Aorta (tissue), 5 donors: ENCODE measurements at regions of chr10 and their contacts with region 1.

Region 1: DNA sequence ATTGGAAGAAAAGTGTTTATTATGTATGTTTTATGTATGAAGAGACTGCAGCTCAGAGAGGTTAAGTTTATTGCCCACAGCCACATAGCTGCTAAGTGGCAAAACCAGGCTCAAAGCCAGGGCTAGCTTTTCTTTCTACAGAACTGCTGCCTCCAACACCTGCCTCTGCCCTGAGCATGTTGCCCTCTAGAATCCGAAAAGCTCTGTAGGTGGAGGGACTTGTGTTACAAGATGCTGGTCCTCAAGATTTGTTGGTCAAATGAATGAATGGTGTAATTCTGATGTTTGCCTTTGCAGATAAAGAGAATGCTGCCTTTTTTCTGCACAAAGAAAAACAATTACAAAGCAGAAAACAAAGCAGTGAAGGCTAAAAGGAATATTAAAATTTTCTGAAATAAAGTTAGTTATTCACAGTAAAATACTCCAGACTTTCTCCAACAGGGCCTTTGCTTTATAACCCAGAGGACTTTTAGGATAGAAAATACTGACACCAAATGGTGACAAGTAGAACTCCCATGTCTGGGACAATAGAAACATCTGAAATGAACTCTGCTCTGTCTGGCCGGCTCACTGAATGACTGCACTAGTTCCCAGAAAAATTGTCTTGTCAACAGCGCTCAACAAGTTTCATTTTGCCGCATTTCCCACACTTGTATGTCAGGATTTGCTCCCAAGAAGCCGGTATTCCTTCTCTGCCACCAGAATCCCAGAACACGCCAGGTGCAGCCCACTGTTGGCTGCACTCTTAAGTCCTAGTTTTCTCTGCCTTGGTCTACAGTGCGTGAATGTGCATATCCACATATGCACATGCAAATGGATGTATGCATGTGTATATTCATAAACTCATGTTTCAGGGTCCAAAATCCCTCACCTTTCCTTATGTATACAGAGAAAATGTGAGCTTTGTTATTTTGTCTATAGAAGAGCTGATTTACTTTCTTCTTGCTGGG is 11.0 kb upstream of the DNTT start:
- DNase-seq: no peak
- ATAC-seq: peak; percentile 80
- H3K4me3 ChIP-seq: no peak overlapping the region
- H3K27ac ChIP-seq: no peak overlapping the region
- H3K4me1 ChIP-seq: peaks cover 0 to under 1% of the 10 kb centered on the region in 2 donors
- H3K27me3 ChIP-seq: no peaks in the 10 kb centered on the region

Region 2: DNA sequence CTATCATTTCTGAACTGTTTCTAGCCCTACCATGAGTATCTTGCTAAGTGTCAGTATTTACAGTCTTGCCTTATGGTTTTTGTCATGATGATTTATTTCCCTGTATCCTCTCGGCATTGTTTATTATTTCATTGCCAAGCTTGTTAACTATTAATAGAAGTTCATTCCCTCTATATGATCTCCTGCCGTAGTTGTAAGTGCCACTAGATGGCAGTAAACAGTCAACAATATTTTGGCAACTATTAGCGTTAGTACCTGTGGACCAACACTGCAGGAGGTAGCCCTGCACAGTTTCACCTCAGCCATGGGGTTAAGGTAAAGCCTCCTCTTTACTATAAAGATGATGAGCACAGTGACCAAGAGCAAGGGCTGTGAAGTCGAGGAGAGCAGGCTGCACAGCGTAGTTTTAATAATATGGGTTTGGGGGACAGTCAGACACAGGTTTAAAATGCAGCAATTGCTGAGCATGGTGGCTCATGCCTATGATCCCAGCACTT is 276.0 kb before region 1 on chr10:
- intact Hi-C with region 1: loop called (anchors 5 to 10 kb)
- DNase-seq: no peak
- ATAC-seq: peak; percentile 79
- H3K4me3 ChIP-seq: no peak overlapping the region
- H3K27ac ChIP-seq: no peak overlapping the region
- H3K4me1 ChIP-seq: no peaks in the 10 kb centered on the region
- H3K27me3 ChIP-seq: no peaks in the 10 kb centered on the region

Region 3: GRCh38 chr10:96229568-96230030 is 63.6 kb before region 1 on chr10:
- intact Hi-C with region 1: loop called (anchors 1 to 2 kb)
- DNase-seq: peak; percentile 86 to 93
- ATAC-seq: peak; percentile 88
- H3K4me3 ChIP-seq: no peak overlapping the region
- H3K27ac ChIP-seq: no peak overlapping the region
- H3K4me1 ChIP-seq: no peaks in the 10 kb centered on the region
- H3K27me3 ChIP-seq: no peaks in the 10 kb centered on the region